OCI-LY7 (cell line): ENCODE measurements at regions of chr1 and their contacts with region 1.

Region 1: DNA sequence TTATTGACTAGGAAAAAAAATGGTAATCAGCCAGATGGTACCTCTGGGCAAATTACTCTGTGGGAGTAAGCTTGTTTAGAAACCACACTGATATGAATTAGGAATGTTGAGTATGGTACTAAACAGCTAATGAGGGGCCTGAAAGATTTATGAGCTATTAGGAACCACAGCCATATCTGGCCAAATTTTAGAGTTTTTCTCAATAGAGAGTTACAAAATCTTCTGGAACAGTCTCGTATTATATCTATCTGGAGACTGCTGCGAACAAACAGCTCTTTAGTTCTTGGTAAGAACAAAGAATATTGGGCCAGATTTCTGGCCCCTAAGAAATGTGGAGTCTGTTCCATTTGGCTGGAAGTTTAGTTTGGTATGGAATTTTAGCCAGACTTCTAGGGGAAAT is 4.9 kb upstream of the PODN start:
- DNase-seq: no peak
- H3K4me3 ChIP-seq: no peak overlapping the region
- H3K27ac ChIP-seq: no peak overlapping the region
- H3K4me1 ChIP-seq: no peaks in the 10 kb centered on the region
- CTCF ChIP-seq: no peak

Region 2: DNA sequence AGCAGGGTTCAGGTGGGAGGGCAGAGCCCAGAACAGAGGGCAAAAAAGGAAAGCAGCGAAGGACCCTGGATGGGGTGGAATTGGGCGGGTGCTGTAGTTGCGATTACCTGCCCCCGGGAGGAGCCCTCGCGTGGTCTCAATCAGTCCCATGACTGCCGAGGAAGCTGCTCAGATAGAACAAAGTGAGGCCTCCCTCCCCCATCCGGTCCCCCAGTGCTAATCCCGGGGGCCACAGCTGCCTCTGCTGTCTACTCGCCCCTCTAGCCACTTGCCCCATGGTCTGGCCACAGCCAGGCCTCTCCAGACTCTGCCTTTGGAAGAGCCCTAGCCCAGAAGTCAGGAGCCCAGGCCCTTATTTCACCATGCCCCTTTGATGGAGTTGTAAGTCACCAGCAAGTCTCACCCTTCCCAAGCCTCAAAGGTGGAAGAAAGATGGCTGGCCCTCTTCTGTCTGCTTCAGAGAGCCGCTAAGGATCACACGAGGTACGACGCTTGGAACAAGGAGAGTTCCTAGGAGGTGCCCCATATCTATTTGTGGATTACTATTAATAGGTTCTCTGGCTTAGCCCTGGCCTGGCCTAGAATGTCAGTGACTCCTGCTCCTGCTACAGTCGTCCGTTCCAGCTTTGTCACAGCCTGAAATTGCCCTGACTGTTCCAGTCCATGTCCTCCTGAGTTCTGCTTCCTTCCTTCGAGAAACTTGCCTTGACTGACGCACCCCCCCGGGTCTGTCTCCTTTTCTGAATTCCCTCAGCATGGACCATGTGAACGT is 152.0 kb before region 1 on chr1:
- CTCF ChIA-PET with region 1: no interaction called
- POLR2A ChIA-PET with region 1: no interaction called
- intact Hi-C with region 1: loop called (anchors 10 kb)
- DNase-seq: peak; percentile 58
- H3K4me3 ChIP-seq: no peak overlapping the region
- H3K27ac ChIP-seq: no peak overlapping the region
- H3K4me1 ChIP-seq: peaks cover 3% of the 10 kb centered on the region
- CTCF ChIP-seq: peak; percentile 77

Region 3: DNA sequence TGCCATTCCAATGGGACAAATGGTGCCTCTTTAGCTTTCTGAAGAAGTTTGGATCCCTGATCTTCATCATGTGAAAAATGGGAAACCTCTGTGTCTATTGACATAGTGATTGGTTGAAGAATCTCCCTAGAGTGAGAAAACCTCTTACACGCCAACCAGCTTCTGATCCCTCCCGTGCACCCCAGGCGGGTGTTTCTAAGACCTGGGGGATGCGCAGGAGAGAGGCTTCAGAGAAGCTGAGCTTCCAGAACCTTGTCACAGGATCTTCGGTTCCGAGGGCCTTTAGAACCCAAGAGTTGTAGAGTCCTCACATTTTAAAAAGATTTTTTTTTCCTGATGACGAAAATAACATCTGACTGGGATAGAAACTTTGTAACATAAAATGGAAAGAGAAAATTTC is 16.2 kb after region 1 on chr1:
- CTCF ChIA-PET with region 1: no interaction called
- POLR2A ChIA-PET with region 1: no interaction called
- intact Hi-C with region 1: no loop called
- DNase-seq: no peak
- H3K4me3 ChIP-seq: no peak overlapping the region
- H3K27ac ChIP-seq: no peak overlapping the region
- H3K4me1 ChIP-seq: no peaks in the 10 kb centered on the region
- CTCF ChIP-seq: no peak